K562 (cell line): ENCODE measurements at regions of chr6 and their contacts with region 1.

Region 1: GRCh38 chr6:13908955-13909381 is 15.8 kb upstream of the RNF182 start:
- DNase-seq: peak; percentile 85 to 87 (median 86)
- ATAC-seq: peak; percentile 86
- H3K4me3 ChIP-seq: no peak overlapping the region
- H3K27ac ChIP-seq: no peak overlapping the region
- H3K4me1 ChIP-seq: peaks cover 9 to 21% of the 10 kb centered on the region in 2 experiments; a peak in 4 of 5 replicates
- H3K27me3 ChIP-seq: no peaks in the 10 kb centered on the region
- CTCF ChIP-seq: peak; percentile 86 to 97 (median 91)
- EP300 ChIP-seq: 0 out of 2 replicates have a peak, but pooled peaks have one; percentile 25
- POLR2A ChIP-seq: no peak
- RAD21 ChIP-seq: peak; percentile 99

Region 2: DNA sequence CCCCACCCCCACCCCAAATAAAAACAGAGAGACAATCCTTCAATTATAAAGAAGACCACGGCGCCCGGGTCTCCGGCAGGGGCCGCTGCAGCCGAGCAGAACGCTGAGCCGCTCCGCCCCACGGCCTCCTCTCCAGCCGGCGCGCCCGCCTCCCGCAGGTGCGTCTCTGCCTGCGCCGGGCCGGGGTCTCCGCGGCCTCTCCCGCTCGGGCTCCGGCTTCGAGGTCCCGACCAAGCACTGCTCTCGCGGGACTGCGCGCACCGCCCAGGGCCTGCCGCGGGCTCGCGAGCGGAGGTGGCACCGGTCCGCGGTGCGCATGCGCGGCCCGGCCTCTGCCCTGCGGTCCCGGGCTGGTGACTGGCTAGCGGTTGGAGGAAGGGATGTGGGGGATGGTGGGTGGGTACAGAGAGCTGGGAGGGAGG is 334.8 kb before region 1 on chr6:
- CTCF ChIA-PET with region 1: no interaction called
- POLR2A ChIA-PET with region 1: interaction called, 3 read pairs
- in situ Hi-C with region 1: no loop called
- intact Hi-C with region 1: loop called (anchors 10 kb)
- DNase-seq: peak; percentile 97 to 99 (median 98)
- ATAC-seq: peak; percentile 90
- H3K4me3 ChIP-seq: peak overlapping the region; percentile 56
- H3K27ac ChIP-seq: peak overlapping the region; percentile 87
- H3K4me1 ChIP-seq: peaks cover 17 to 20% of the 10 kb centered on the region in 2 experiments
- H3K27me3 ChIP-seq: no peaks in the 10 kb centered on the region; a peak in 1 of 5 replicates
- CTCF ChIP-seq: peak; percentile 49 to 88 (median 74); a peak in 5 of 6 replicates
- EP300 ChIP-seq: no peak
- POLR2A ChIP-seq: no peak
- RAD21 ChIP-seq: peak; percentile 59 to 66

Region 3: GRCh38 chr6:13795041-13795750 is 113.8 kb before region 1 on chr6:
- CTCF ChIA-PET with region 1: no interaction called
- POLR2A ChIA-PET with region 1: no interaction called
- in situ Hi-C with region 1: no loop called
- intact Hi-C with region 1: loop called (anchors 1 kb)
- DNase-seq: peak; percentile 75 to 89 (median 81)
- ATAC-seq: peak; percentile 100
- H3K4me3 ChIP-seq: no peak overlapping the region
- H3K27ac ChIP-seq: no peak overlapping the region
- H3K4me1 ChIP-seq: no peaks in the 10 kb centered on the region
- H3K27me3 ChIP-seq: no peaks in the 10 kb centered on the region
- CTCF ChIP-seq: peak; percentile 85 to 96 (median 96)
- EP300 ChIP-seq: no peak
- POLR2A ChIP-seq: no peak
- RAD21 ChIP-seq: peak; percentile 87 to 92

Region 4: GRCh38 chr6:14046476-14047068 is 137.6 kb after region 1 on chr6:
- CTCF ChIA-PET with region 1: interaction called, 20 read pairs
- POLR2A ChIA-PET with region 1: interaction called, 5 read pairs
- in situ Hi-C with region 1: no loop called
- intact Hi-C with region 1: loop called (anchors 1 kb)
- DNase-seq: peak; percentile 70 to 81 (median 76)
- ATAC-seq: peak; percentile 92
- H3K4me3 ChIP-seq: no peak overlapping the region
- H3K27ac ChIP-seq: no peak overlapping the region
- H3K4me1 ChIP-seq: no peaks in the 10 kb centered on the region; a peak in 1 of 5 replicates
- H3K27me3 ChIP-seq: no peaks in the 10 kb centered on the region
- CTCF ChIP-seq: peak; percentile 80 to 84 (median 81)
- EP300 ChIP-seq: no peak
- POLR2A ChIP-seq: no peak
- RAD21 ChIP-seq: peak; percentile 68 to 83

Region 5: DNA sequence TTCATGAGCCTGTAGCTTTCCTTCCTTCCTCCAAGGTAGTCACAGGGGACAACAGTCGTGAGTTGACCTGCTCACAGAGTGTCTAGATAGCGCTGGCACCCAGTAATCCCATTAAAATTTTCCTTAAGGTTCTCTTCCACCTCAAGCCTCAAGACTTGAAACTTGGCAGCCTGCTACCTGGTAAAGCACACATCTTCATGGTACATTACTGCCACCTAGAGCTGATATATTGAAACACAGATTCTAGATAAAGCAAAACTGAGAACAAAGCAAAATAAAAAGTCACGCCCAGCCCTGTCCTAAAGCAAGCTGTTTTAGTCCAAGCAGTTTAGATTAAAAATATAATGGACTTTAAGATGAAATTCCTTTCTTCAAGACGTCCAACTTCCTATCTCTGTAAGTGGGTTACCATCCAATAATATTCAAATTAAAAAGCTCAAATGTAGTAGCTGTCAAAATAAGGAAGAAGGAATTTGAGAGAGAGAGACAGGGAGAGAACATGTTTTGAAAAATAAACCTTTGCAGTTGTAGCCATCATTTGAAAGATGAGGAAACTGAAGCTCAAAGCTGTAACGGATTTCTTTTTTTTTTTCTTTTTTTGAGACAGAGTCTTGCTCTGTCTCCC is 157.9 kb after region 1 on chr6:
- CTCF ChIA-PET with region 1: interaction called, 34 read pairs
- POLR2A ChIA-PET with region 1: interaction called, 8 read pairs
- in situ Hi-C with region 1: loop called (anchors 5 kb)
- intact Hi-C with region 1: loop called (anchors 1 kb)
- DNase-seq: peak; percentile 69 to 83 (median 74)
- ATAC-seq: peak; percentile 94
- H3K4me3 ChIP-seq: no peak overlapping the region
- H3K27ac ChIP-seq: no peak overlapping the region
- H3K4me1 ChIP-seq: no peaks in the 10 kb centered on the region
- H3K27me3 ChIP-seq: no peaks in the 10 kb centered on the region
- CTCF ChIP-seq: peak; percentile 77 to 92 (median 79)
- EP300 ChIP-seq: no peak
- POLR2A ChIP-seq: no peak
- RAD21 ChIP-seq: peak; percentile 96 to 98

Region 6: GRCh38 chr6:14100138-14100537 is 191.2 kb after region 1 on chr6:
- CTCF ChIA-PET with region 1: no interaction called
- POLR2A ChIA-PET with region 1: no interaction called
- in situ Hi-C with region 1: no loop called
- intact Hi-C with region 1: no loop called
- DNase-seq: no peak
- ATAC-seq: no peak
- H3K4me3 ChIP-seq: no peak overlapping the region
- H3K27ac ChIP-seq: no peak overlapping the region
- H3K4me1 ChIP-seq: no peaks in the 10 kb centered on the region
- H3K27me3 ChIP-seq: peaks cover 0 to 5% of the 10 kb centered on the region in 2 experiments; a peak in 2 of 5 replicates
- CTCF ChIP-seq: no peak
- EP300 ChIP-seq: no peak
- POLR2A ChIP-seq: no peak
- RAD21 ChIP-seq: no peak

Region 7: GRCh38 chr6:14129575-14129974 is 220.6 kb after region 1 on chr6:
- CTCF ChIA-PET with region 1: no interaction called
- POLR2A ChIA-PET with region 1: no interaction called
- in situ Hi-C with region 1: no loop called
- intact Hi-C with region 1: loop called (anchors 5 kb)
- DNase-seq: peak; percentile 61 to 81 (median 72)
- ATAC-seq: peak; percentile 99
- H3K4me3 ChIP-seq: no peak overlapping the region
- H3K27ac ChIP-seq: no peak overlapping the region
- H3K4me1 ChIP-seq: peaks cover 4 to 11% of the 10 kb centered on the region in 2 experiments; a peak in 2 of 5 replicates
- H3K27me3 ChIP-seq: no peaks in the 10 kb centered on the region
- CTCF ChIP-seq: peak; percentile 79 to 91 (median 91)
- EP300 ChIP-seq: no peak
- POLR2A ChIP-seq: no peak
- RAD21 ChIP-seq: peak; percentile 93 to 94

Region 8: GRCh38 chr6:14144678-14145113 is 235.7 kb after region 1 on chr6:
- CTCF ChIA-PET with region 1: interaction called, 7 read pairs
- POLR2A ChIA-PET with region 1: no interaction called
- in situ Hi-C with region 1: loop called (anchors 5 kb)
- intact Hi-C with region 1: loop called (anchors 1 kb)
- DNase-seq: peak; percentile 90 to 96 (median 93)
- ATAC-seq: peak; percentile 99
- H3K4me3 ChIP-seq: no peak overlapping the region
- H3K27ac ChIP-seq: no peak overlapping the region
- H3K4me1 ChIP-seq: peaks cover 0 to 3% of the 10 kb centered on the region in 2 experiments; a peak in 2 of 5 replicates
- H3K27me3 ChIP-seq: peaks cover 18 to 31% of the 10 kb centered on the region in 2 experiments; a peak in 4 of 5 replicates
- CTCF ChIP-seq: peak; percentile 94 to 97 (median 95)
- EP300 ChIP-seq: no peak
- POLR2A ChIP-seq: no peak
- RAD21 ChIP-seq: peak; percentile 95 to 96